ENCODE measurements at regions of chr20 and their contacts with region 1.

Region 1: GRCh38 chr20:44909872-44910689 is at the start of gene PABPC1L:
- DNase-seq: peak; percentile 86
- ATAC-seq: peak; percentile 90
- H3K4me3 Mint-ChIP-seq: peak within 1 kb of the TSS; percentile 78
- H3K27ac Mint-ChIP-seq: peak within 1 kb of the TSS; percentile 64
- H3K4me1 Mint-ChIP-seq: peaks cover 34% of the 10 kb centered on the region
- H3K27me3 Mint-ChIP-seq: no peaks in the 10 kb centered on the region
- total RNA-seq, gene PABPC1L: 61.7 to 71.3 TPM

Region 2: GRCh38 chr20:45111799-45112471 is 201.9 kb after region 1 on chr20:
- CTCF ChIA-PET with region 1: interaction called, 3 read pairs
- POLR2A ChIA-PET with region 1: no interaction called
- intact Hi-C with region 1: loop called in 1 of 2 experiments (anchors 5 kb)
- DNase-seq: peak; percentile 59
- ATAC-seq: peak; percentile 59
- H3K4me3 Mint-ChIP-seq: no peak overlapping the region
- H3K27ac Mint-ChIP-seq: no peak overlapping the region
- H3K4me1 Mint-ChIP-seq: peaks cover 4% of the 10 kb centered on the region
- H3K27me3 Mint-ChIP-seq: peaks cover 1% of the 10 kb centered on the region